Transverse colon (tissue), 4 donors: ENCODE measurements at regions of chr7 and their contacts with region 1.

Region 1: GRCh38 chr7:130683026-130683425 is 3.3 kb downstream of the TSGA13 start:
- DNase-seq: no peak
- H3K4me3 ChIP-seq: no peak overlapping the region
- H3K27ac ChIP-seq: no peak overlapping the region
- H3K4me1 ChIP-seq: no peaks in the 10 kb centered on the region
- H3K27me3 ChIP-seq: no peaks in the 10 kb centered on the region
- CTCF ChIP-seq: no peak
- EP300 ChIP-seq: no peak
- POLR2A ChIP-seq: no peak

Region 2: GRCh38 chr7:130697820-130698219 is 14.8 kb after region 1 on chr7:
- in situ Hi-C with region 1: no loop called
- intact Hi-C with region 1: loop called (anchors 1 kb)
- DNase-seq: no peak
- H3K4me3 ChIP-seq: no peak overlapping the region
- H3K27ac ChIP-seq: no peak overlapping the region
- H3K4me1 ChIP-seq: no peaks in the 10 kb centered on the region
- H3K27me3 ChIP-seq: no peaks in the 10 kb centered on the region
- CTCF ChIP-seq: no peak
- EP300 ChIP-seq: no peak
- POLR2A ChIP-seq: no peak

Region 3: GRCh38 chr7:130750755-130751154 is 67.7 kb after region 1 on chr7:
- in situ Hi-C with region 1: no loop called
- intact Hi-C with region 1: loop called (anchors 2 kb)
- DNase-seq: no peak
- H3K4me3 ChIP-seq: no peak overlapping the region
- H3K27ac ChIP-seq: no peak overlapping the region
- H3K4me1 ChIP-seq: peaks cover 0 to 6% (median 0%) of the 10 kb centered on the region in 4 donors
- H3K27me3 ChIP-seq: peaks cover 11% of the 10 kb centered on the region
- CTCF ChIP-seq: no peak
- EP300 ChIP-seq: no peak
- POLR2A ChIP-seq: no peak